Left colon (tissue), 2 donors: ENCODE measurements at regions of chr18 and their contacts with region 1.

Region 1: GRCh38 chr18:30971338-30971956 is 71.1 kb downstream of the DSC3 start:
- DNase-seq: no peak
- ATAC-seq: peak; percentile 61

Region 2: DNA sequence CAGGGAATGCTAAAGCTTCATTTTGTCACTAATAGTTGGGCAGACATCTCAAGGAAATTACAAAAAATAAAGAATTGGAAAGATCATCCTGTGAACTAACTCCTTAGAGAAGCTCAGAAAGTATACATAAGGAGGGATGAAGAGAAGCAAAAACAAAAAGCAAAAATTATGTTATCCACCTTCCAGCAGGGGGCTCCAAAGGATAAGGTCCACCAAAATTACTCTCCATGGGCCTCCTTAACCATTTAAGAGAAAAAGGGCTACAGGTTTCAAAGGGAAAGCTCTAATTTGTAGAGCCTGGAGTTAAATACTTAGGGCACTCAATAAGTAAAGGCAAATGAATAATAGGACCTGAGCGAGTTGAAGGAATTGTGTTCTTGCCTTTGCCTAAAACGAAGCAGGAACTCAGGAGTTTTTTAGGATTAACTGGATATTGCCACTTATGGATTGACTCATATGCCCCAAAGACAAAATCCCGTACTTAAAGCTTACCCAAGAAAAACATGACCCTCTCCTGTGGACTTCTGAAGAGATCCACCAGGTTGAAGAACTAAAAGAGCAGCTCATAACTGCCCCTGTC is 1096.8 kb before region 1 on chr18:
- intact Hi-C with region 1: loop called in 1 of 2 experiments (anchors 5 kb)
- DNase-seq: no peak
- ATAC-seq: no peak